ENCODE measurements at regions of chr10 and their contacts with region 1.

Region 1: GRCh38 chr10:101782811-101783735 is at the start of gene NPM3:
- DNase-seq: peak; percentile 94
- ATAC-seq: peak; percentile 82
- H3K4me3 Mint-ChIP-seq: peak within 1 kb of the TSS; percentile 94
- H3K27ac Mint-ChIP-seq: peak within 1 kb of the TSS; percentile 97
- H3K4me1 Mint-ChIP-seq: peaks cover 52% of the 10 kb centered on the region
- H3K27me3 Mint-ChIP-seq: peaks cover 6% of the 10 kb centered on the region
- total RNA-seq, gene NPM3: 207 to 214 TPM

Region 2: DNA sequence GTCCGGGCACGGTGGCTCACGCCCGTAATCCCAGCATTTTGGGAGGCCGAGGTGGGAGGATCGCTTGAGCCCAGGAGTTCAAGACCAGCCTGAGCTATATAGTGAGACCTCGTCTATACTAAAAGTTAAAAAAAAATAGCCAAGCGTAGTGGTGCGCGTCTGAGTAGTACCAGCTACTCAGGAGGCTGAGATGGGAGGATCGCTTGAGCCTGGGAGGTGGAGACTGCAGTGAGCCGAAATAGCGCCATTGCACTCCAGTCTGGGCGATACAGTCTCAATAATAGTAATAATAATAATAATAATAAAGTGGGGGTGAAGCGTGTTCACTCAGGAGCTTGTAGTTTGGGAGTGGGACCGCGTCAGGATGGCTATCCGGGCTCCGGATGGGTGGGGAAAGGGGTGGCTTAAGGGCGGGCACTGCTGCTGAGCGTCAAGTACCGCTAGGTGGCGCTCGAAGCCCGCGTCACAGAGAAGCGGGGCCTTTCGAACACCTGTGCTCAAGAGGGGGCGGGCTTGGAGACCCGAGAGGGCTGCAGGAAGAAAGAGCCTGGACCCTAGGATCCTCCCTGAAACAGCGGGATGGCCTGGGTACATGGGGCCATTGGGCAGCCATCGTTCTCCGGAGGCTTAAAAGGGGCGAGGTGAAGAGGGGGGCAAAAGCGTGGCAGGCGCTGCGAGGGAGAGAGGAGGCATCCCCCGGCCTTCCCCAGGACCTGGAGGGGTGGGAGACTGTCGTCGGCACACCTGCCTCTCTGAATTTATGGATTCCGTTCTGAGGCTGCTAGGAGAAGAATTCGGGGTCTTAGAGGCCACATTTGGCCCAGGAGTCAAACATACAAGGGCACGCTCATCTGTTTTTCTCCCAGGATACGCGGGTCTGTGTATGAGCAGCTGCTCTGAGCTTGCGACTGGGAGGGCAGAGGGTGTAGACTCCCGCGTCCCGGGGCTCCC is 568.4 kb before region 1 on chr10:
- CTCF ChIA-PET with region 1: interaction called, 3 read pairs
- POLR2A ChIA-PET with region 1: no interaction called
- intact Hi-C with region 1: loop called in 1 of 2 experiments (anchors 1 kb)
- DNase-seq: peak; percentile 89
- ATAC-seq: peak; percentile 84
- H3K4me3 Mint-ChIP-seq: peak overlapping the region; percentile 68
- H3K27ac Mint-ChIP-seq: no peak overlapping the region
- H3K4me1 Mint-ChIP-seq: peaks cover 28% of the 10 kb centered on the region
- H3K27me3 Mint-ChIP-seq: peaks cover 69% of the 10 kb centered on the region

Region 3: DNA sequence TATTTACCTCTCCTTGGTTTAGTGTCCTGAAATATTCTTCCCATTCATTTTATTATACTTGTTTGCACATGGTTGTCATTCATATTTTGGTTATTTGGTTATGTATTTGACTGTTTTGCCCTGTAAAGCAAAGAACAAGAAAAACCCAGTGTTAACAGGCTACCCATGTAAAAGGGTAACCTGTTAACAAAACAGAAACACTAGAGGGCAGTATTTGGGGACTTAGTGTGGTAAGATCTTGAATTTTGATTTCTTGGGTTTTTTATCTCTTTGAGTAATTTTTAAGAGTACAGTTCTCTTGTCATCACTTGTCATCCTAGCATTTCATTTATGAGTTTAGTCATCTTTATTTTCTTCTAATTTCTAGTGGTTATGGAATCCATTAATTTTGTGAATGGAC is 246.3 kb before region 1 on chr10:
- CTCF ChIA-PET with region 1: no interaction called
- POLR2A ChIA-PET with region 1: no interaction called
- intact Hi-C with region 1: loop called in 1 of 2 experiments (anchors 2 kb)
- DNase-seq: no peak
- ATAC-seq: peak; percentile 23
- H3K4me3 Mint-ChIP-seq: no peak overlapping the region
- H3K27ac Mint-ChIP-seq: no peak overlapping the region
- H3K4me1 Mint-ChIP-seq: no peaks in the 10 kb centered on the region
- H3K27me3 Mint-ChIP-seq: no peaks in the 10 kb centered on the region

Region 4: GRCh38 chr10:101602761-101603398 is 180.2 kb before region 1 on chr10:
- CTCF ChIA-PET with region 1: interaction called, 43 read pairs
- POLR2A ChIA-PET with region 1: interaction called, 6 read pairs
- intact Hi-C with region 1: loop called (anchors 1 kb)
- DNase-seq: peak; percentile 90
- ATAC-seq: peak; percentile 98
- H3K4me3 Mint-ChIP-seq: no peak overlapping the region
- H3K27ac Mint-ChIP-seq: no peak overlapping the region
- H3K4me1 Mint-ChIP-seq: no peaks in the 10 kb centered on the region
- H3K27me3 Mint-ChIP-seq: no peaks in the 10 kb centered on the region

Region 5: DNA sequence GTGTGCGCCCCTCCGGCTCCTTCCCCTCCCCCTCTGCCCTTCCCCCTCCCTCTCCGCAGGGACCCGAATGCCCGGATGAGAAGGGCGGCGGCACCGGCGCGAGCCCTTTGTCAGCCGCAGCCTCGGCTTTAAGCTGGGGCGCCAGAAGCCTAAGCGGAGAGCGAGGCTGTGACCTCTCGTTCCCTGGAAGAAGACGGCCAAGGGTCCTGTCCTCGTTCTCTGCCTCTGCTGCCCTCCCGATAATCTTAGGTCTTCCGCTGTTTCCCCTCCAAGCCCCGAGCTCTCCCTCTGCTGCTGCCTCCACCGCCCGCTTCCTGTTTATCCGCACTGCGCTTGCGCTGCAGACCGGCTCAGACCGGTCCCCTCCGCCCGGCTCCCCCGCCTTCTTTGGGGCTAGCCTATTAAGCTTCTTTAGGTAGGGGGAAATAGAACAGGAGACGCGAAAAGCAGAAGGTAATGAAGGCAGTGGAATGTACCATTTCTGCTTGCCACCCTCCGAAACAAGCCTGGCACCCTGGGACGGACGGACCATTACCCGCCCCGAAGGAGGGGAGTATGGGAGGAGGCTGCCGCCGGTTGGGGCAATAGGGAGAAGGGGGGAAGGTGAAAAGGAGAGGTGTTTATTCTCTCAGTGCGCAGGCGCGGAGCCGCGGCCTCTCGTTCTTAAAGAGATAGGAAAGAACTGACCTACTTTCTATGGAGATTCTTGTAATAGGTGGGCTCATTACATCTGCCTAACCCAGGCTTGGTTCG is 35.2 kb after region 1 on chr10 and contains the start of gene OGA:
- CTCF ChIA-PET with region 1: interaction called, 11 read pairs
- POLR2A ChIA-PET with region 1: interaction called, 12 read pairs
- intact Hi-C with region 1: loop called (anchors 1 kb)
- DNase-seq: peak; percentile 99
- ATAC-seq: peak; percentile 89
- H3K4me3 Mint-ChIP-seq: peak within 1 kb of the TSS; percentile 89
- H3K27ac Mint-ChIP-seq: peak within 1 kb of the TSS; percentile 83
- H3K4me1 Mint-ChIP-seq: peaks cover 40% of the 10 kb centered on the region
- H3K27me3 Mint-ChIP-seq: no peaks in the 10 kb centered on the region
- total RNA-seq, gene OGA: 113 to 124 TPM

Region 6: GRCh38 chr10:101920546-101920945 is 137.5 kb after region 1 on chr10:
- CTCF ChIA-PET with region 1: no interaction called
- POLR2A ChIA-PET with region 1: no interaction called
- intact Hi-C with region 1: no loop called
- DNase-seq: no peak
- ATAC-seq: no peak
- H3K4me3 Mint-ChIP-seq: no peak overlapping the region
- H3K27ac Mint-ChIP-seq: no peak overlapping the region
- H3K4me1 Mint-ChIP-seq: peaks cover 7% of the 10 kb centered on the region
- H3K27me3 Mint-ChIP-seq: no peaks in the 10 kb centered on the region

Region 7: DNA sequence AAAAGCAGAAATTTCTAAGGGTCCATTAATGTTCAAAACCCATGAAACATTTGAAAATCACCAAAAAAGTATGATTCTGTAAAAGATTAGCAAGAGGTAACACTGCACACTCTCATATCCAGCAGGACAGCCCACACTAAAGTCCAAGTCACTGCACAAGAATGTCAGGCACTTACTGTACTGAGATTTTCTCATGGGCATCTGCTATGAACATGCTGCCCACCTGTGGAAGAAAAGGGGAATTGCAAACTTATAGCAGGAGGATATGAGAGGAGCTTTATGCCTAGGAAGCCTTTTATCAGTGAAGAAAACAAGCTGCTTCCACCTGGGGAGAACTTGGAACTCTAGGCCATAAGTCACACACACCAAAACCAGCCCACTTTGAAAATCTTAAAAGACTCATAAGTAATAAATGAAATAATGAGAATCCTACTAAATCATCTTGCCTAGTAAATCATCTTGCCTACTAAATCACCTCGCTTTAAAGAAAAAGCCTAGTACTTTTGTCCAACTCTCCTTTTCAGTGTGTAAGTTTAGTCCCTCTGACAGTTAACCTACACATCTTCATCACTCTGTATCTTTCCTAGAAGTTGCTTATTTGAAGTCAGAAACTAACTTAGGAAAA is 226.8 kb after region 1 on chr10:
- CTCF ChIA-PET with region 1: interaction called, 10 read pairs
- POLR2A ChIA-PET with region 1: no interaction called
- intact Hi-C with region 1: loop called in 1 of 2 experiments (anchors 5 kb)
- DNase-seq: peak; percentile 46
- ATAC-seq: peak; percentile 84
- H3K4me3 Mint-ChIP-seq: no peak overlapping the region
- H3K27ac Mint-ChIP-seq: no peak overlapping the region
- H3K4me1 Mint-ChIP-seq: no peaks in the 10 kb centered on the region
- H3K27me3 Mint-ChIP-seq: no peaks in the 10 kb centered on the region

Region 8: DNA sequence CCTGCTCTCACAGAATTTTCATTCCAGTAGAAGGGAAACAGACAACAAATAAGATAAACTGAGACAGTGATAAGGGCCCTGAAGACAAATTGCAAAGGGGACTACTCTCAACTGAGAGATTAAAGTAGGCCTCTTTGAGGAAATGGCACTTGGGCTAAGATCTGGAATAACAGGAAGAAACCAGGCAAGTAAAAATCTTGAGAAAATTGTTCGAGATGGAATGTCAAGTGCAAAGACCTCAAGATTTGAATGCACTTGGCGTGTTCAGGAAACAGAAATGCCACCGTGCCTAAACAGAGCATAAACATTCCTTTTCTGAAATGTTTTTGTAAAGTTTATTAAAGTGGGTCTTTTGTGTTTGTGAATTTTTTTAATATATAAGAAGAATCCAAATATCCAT is 262.2 kb after region 1 on chr10:
- CTCF ChIA-PET with region 1: no interaction called
- POLR2A ChIA-PET with region 1: no interaction called
- intact Hi-C with region 1: no loop called
- DNase-seq: no peak
- ATAC-seq: no peak
- H3K4me3 Mint-ChIP-seq: no peak overlapping the region
- H3K27ac Mint-ChIP-seq: no peak overlapping the region
- H3K4me1 Mint-ChIP-seq: peaks cover 30% of the 10 kb centered on the region
- H3K27me3 Mint-ChIP-seq: no peaks in the 10 kb centered on the region

Region 9: GRCh38 chr10:102114861-102115618 is 332.0 kb after region 1 on chr10:
- CTCF ChIA-PET with region 1: no interaction called
- POLR2A ChIA-PET with region 1: no interaction called
- intact Hi-C with region 1: loop called in 1 of 2 experiments (anchors 1 kb)
- DNase-seq: peak; percentile 95
- ATAC-seq: peak; percentile 60
- H3K4me3 Mint-ChIP-seq: peak overlapping the region; percentile 81
- H3K27ac Mint-ChIP-seq: peak overlapping the region; percentile 97
- H3K4me1 Mint-ChIP-seq: peaks cover 55% of the 10 kb centered on the region
- H3K27me3 Mint-ChIP-seq: no peaks in the 10 kb centered on the region

Measured in activated CD4-positive, alpha-beta T cell treated with anti-CD3 and anti-CD28 coated beads for 36 hours (primary cell).